ENCODE measurements at regions of chr2 and their contacts with region 1.

Region 1: GRCh38 chr2:203814661-203815540 is 52.7 kb upstream of the CTLA4 start:
- DNase-seq: peak in 7 of 9 donors; percentile 59 to 80 (median 68)
- ATAC-seq: peak; percentile 87
- H3K4me3 ChIP-seq: peak overlapping the region; percentile 24
- H3K4me3 Mint-ChIP-seq: peak overlapping the region; percentile 55 to 90 (median 80)
- H3K27ac ChIP-seq: no peak overlapping the region
- H3K27ac Mint-ChIP-seq: peak overlapping the region; percentile 16 to 92 (median 74)
- H3K4me1 ChIP-seq: peaks cover 23 to 30% of the 10 kb centered on the region in 2 donors
- H3K4me1 Mint-ChIP-seq: peaks cover 27 to 55% (median 52%) of the 10 kb centered on the region in 7 donors
- H3K27me3 ChIP-seq: no peaks in the 10 kb centered on the region
- H3K27me3 Mint-ChIP-seq: peaks cover 0 to 6% (median 0%) of the 10 kb centered on the region in 5 donors

Region 2: DNA sequence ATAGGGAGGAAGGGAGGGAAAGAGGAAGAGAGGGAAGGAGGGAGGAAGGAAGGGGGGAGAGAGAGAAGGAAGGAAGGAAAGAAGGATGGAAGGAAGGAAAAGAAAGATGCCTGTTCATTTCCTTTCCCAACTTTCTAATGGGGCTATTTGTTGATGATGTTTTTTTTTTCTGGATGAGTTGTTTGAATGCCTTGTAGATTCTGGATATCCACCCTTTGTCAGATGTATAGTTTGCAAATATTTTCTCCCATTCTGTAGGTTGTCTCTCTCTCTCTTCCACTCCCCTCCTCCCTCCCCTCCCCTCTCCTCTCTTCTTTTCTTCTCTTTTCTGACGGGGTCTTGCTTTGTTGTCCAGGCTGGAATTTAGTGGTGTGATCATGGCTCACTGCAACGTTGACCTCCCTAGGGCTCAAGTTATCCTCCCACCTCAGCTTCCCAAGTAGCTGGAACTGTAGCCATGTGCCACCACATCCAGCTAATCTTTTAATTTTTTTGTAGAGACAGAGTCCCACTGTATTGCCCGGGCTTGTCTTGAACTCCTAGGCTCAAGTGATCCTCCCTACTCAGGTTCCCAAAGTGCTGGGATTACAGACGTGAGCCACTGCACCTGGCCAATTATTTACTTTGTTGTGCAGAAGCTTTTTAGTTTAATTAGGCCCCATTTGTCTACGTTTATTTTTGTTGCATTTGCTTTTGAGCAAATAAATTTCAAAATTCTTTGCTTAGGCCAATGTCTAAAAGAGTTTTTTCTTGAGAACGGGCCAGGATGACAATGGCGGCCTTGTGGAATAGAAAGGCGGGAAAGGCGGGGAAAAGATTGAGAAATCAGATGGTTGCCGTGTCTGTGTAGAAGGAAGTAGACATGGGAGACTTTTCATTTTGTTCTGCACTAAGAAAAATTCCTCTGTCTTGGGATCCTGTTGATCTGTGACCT is 1237.4 kb before region 1 on chr2:
- CTCF ChIA-PET with region 1: no interaction called
- POLR2A ChIA-PET with region 1: no interaction called
- intact Hi-C with region 1: loop called (anchors 5 kb)
- DNase-seq: no peak
- ATAC-seq: no peak
- H3K4me3 ChIP-seq: no peak overlapping the region
- H3K4me3 Mint-ChIP-seq: no peak overlapping the region
- H3K27ac ChIP-seq: no peak overlapping the region
- H3K27ac Mint-ChIP-seq: peak overlapping the region in 2 of 9 donors; percentile 38 to 53
- H3K4me1 ChIP-seq: no peaks in the 10 kb centered on the region
- H3K4me1 Mint-ChIP-seq: peaks cover 0 to 2% (median 0%) of the 10 kb centered on the region in 7 donors
- H3K27me3 ChIP-seq: no peaks in the 10 kb centered on the region
- H3K27me3 Mint-ChIP-seq: no peaks in the 10 kb centered on the region

Region 3: GRCh38 chr2:202870431-202871299 is 944.2 kb before region 1 on chr2:
- CTCF ChIA-PET with region 1: no interaction called
- POLR2A ChIA-PET with region 1: no interaction called
- intact Hi-C with region 1: loop called in 1 of 2 experiments (anchors 10 kb)
- DNase-seq: peak; percentile 32 to 68 (median 57)
- ATAC-seq: peak; percentile 85
- H3K4me3 ChIP-seq: peak overlapping the region; percentile 84
- H3K4me3 Mint-ChIP-seq: peak overlapping the region; percentile 89 to 98 (median 94)
- H3K27ac ChIP-seq: peak overlapping the region; percentile 60
- H3K27ac Mint-ChIP-seq: peak overlapping the region in 7 of 9 donors; percentile 8 to 84 (median 66)
- H3K4me1 ChIP-seq: peaks cover 0 to 3% of the 10 kb centered on the region in 2 donors
- H3K4me1 Mint-ChIP-seq: peaks cover 0 to 13% (median 7%) of the 10 kb centered on the region in 7 donors
- H3K27me3 ChIP-seq: no peaks in the 10 kb centered on the region
- H3K27me3 Mint-ChIP-seq: no peaks in the 10 kb centered on the region

Region 4: DNA sequence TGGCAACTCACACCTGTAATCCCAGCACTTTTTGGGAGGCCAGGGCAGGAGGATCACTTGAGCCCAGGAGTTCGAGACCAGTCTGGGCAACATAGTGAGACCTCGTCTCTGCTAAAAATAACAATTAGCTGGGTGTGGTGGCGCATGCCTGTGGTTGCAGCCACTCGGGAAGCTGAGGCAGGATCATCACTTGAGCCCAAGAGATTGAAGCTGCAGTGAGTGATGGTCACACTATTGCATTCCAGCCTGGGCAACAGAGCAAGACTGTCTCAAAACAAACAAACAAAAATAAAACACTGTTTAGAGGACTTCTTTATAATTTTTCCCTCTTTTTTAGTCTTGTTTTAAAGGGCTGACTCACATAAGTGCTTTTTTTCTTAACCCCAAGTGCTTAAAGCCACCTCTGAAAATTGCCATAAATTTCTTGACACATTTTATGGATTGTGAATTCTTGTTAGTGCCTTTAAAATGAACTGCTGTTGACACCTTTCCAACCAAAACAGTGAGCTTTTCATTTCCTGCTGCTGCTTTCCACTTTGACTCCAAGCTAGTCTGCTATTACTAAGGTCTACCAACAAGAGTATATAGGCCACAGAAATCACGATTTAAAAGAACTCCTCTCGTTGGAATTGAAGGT is 534.4 kb before region 1 on chr2:
- CTCF ChIA-PET with region 1: no interaction called
- POLR2A ChIA-PET with region 1: no interaction called
- intact Hi-C with region 1: loop called in 1 of 2 experiments (anchors 10 kb)
- DNase-seq: no peak
- ATAC-seq: no peak
- H3K4me3 ChIP-seq: no peak overlapping the region
- H3K4me3 Mint-ChIP-seq: no peak overlapping the region
- H3K27ac ChIP-seq: no peak overlapping the region
- H3K27ac Mint-ChIP-seq: no peak overlapping the region
- H3K4me1 ChIP-seq: no peaks in the 10 kb centered on the region
- H3K4me1 Mint-ChIP-seq: peaks cover 0 to 8% (median 0%) of the 10 kb centered on the region in 7 donors
- H3K27me3 ChIP-seq: no peaks in the 10 kb centered on the region
- H3K27me3 Mint-ChIP-seq: no peaks in the 10 kb centered on the region

Region 5: DNA sequence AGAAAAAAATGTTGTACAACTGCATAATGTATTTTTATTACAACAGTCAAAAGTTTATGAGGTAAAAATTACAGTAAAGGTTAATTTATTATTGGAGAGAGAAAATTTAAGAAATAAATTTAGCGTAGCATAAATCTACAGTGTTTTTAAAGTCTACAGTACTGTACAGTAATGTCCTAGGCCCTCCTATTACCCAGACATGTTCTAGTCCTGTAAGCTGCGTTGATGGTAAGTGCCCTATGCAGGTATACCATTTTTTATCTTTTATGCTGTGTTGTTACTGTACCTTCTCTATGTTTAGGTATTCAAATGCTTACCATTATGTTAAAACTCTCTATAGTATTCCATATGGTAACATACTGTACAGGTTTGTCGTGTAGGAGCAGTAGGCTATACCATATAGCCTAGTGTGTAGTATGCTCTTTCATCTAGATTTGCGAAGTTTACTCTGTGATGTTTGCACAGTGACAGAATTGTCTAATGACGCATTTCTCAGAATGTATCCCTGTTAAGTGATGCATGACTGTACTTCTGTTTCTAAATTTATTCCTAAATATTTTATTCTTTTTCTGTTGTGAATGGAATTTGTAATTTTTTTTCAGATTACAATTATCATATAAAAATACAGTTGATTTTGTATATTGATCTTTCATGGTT is 462.2 kb before region 1 on chr2:
- CTCF ChIA-PET with region 1: no interaction called
- POLR2A ChIA-PET with region 1: no interaction called
- intact Hi-C with region 1: no loop called
- DNase-seq: no peak
- ATAC-seq: no peak
- H3K4me3 ChIP-seq: no peak overlapping the region
- H3K4me3 Mint-ChIP-seq: no peak overlapping the region
- H3K27ac ChIP-seq: no peak overlapping the region
- H3K27ac Mint-ChIP-seq: no peak overlapping the region
- H3K4me1 ChIP-seq: peaks cover 0 to 2% of the 10 kb centered on the region in 2 donors
- H3K4me1 Mint-ChIP-seq: peaks cover 0 to 4% (median 0%) of the 10 kb centered on the region in 7 donors
- H3K27me3 ChIP-seq: no peaks in the 10 kb centered on the region
- H3K27me3 Mint-ChIP-seq: no peaks in the 10 kb centered on the region

Region 6: DNA sequence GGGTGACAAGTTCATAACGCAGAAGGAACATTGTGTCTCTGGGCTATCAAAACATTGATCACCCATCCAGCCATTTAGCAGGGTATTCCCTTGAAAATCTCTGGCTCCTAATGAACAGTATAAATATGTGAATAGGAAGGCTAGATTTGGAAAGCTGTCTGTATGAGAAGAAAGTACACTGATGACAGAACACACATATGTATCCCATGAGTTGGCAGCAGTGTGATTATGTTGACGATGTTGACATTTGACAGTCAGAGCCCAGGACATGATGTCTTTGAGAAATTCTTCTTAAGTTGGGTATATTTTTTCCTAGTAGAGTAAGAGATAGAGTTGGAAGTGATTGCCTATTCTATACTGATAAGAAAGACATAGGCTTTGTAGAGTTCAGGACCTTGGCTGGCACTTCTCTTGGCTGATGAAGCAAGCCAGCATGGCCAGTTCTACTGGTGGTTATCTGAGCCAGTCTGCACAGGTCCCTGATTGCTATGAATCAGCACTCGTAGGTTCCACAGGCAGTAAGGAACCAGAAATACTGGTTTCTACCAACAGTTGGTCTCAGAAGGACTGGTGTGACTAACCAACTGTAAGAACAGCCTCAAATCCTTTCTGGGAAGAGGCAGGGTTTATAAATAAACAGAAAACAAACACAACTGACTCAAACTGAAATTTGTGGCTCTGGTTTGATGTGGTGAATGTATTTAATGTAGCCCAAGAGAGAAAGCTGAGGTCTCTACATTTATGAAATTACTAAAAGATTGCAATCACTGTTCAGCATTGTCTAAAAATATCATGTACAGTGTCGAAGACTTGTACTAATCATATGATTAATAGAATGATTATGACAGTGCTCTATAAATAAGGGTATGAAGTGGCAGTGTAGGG is 235.9 kb before region 1 on chr2:
- CTCF ChIA-PET with region 1: no interaction called
- POLR2A ChIA-PET with region 1: no interaction called
- intact Hi-C with region 1: loop called in 1 of 2 experiments (anchors 2 kb)
- DNase-seq: peak in 1 of 9 donors; percentile 47
- ATAC-seq: no peak
- H3K4me3 ChIP-seq: no peak overlapping the region
- H3K4me3 Mint-ChIP-seq: peak overlapping the region in 1 of 10 donors; percentile 63
- H3K27ac ChIP-seq: no peak overlapping the region
- H3K27ac Mint-ChIP-seq: peak overlapping the region in 2 of 9 donors; percentile 8 to 47
- H3K4me1 ChIP-seq: peaks cover 0 to 2% of the 10 kb centered on the region in 2 donors
- H3K4me1 Mint-ChIP-seq: peaks cover 0 to 44% (median 0%) of the 10 kb centered on the region in 7 donors
- H3K27me3 ChIP-seq: no peaks in the 10 kb centered on the region
- H3K27me3 Mint-ChIP-seq: peaks cover 0 to 64% (median 0%) of the 10 kb centered on the region in 5 donors

Region 7: GRCh38 chr2:203740780-203741281 is 74.1 kb before region 1 on chr2:
- CTCF ChIA-PET with region 1: interaction called, 18 read pairs
- POLR2A ChIA-PET with region 1: interaction called, 8 read pairs
- intact Hi-C with region 1: loop called (anchors 1 to 2 kb)
- DNase-seq: peak in 7 of 9 donors; percentile 68 to 94 (median 88)
- ATAC-seq: peak; percentile 93
- H3K4me3 ChIP-seq: no peak overlapping the region
- H3K4me3 Mint-ChIP-seq: peak overlapping the region; percentile 60 to 87 (median 70)
- H3K27ac ChIP-seq: peak overlapping the region; percentile 80
- H3K27ac Mint-ChIP-seq: peak overlapping the region; percentile 79 to 98 (median 96)
- H3K4me1 ChIP-seq: peaks cover 55 to 86% of the 10 kb centered on the region in 2 donors
- H3K4me1 Mint-ChIP-seq: peaks cover 57 to 93% (median 84%) of the 10 kb centered on the region in 7 donors
- H3K27me3 ChIP-seq: no peaks in the 10 kb centered on the region
- H3K27me3 Mint-ChIP-seq: no peaks in the 10 kb centered on the region

Region 8: GRCh38 chr2:203871371-203871983 is 56.6 kb after region 1 on chr2:
- CTCF ChIA-PET with region 1: interaction called, 6 read pairs
- POLR2A ChIA-PET with region 1: interaction called, 3 read pairs
- intact Hi-C with region 1: loop called (anchors 2 kb)
- DNase-seq: peak in 1 of 9 donors; percentile 45
- ATAC-seq: peak; percentile 30
- H3K4me3 ChIP-seq: no peak overlapping the region
- H3K4me3 Mint-ChIP-seq: peak overlapping the region; percentile 55 to 96 (median 77)
- H3K27ac ChIP-seq: peak overlapping the region; percentile 79
- H3K27ac Mint-ChIP-seq: peak overlapping the region; percentile 48 to 99 (median 92)
- H3K4me1 ChIP-seq: peaks cover 56 to 64% of the 10 kb centered on the region in 2 donors
- H3K4me1 Mint-ChIP-seq: peaks cover 44 to 93% (median 80%) of the 10 kb centered on the region in 7 donors
- H3K27me3 ChIP-seq: no peaks in the 10 kb centered on the region
- H3K27me3 Mint-ChIP-seq: no peaks in the 10 kb centered on the region

Region 9: GRCh38 chr2:204353823-204354222 is 538.9 kb after region 1 on chr2:
- CTCF ChIA-PET with region 1: no interaction called
- POLR2A ChIA-PET with region 1: no interaction called
- intact Hi-C with region 1: no loop called
- DNase-seq: no peak
- ATAC-seq: no peak
- H3K4me3 ChIP-seq: no peak overlapping the region
- H3K4me3 Mint-ChIP-seq: no peak overlapping the region
- H3K27ac ChIP-seq: no peak overlapping the region
- H3K27ac Mint-ChIP-seq: no peak overlapping the region
- H3K4me1 ChIP-seq: no peaks in the 10 kb centered on the region
- H3K4me1 Mint-ChIP-seq: peaks cover 0 to 2% (median 0%) of the 10 kb centered on the region in 7 donors
- H3K27me3 ChIP-seq: no peaks in the 10 kb centered on the region
- H3K27me3 Mint-ChIP-seq: peaks cover 15 to 44% (median 33%) of the 10 kb centered on the region in 5 donors

Region 10: GRCh38 chr2:204984518-204984917 is 1169.6 kb after region 1 on chr2:
- CTCF ChIA-PET with region 1: no interaction called
- POLR2A ChIA-PET with region 1: no interaction called
- intact Hi-C with region 1: no loop called
- DNase-seq: no peak
- ATAC-seq: no peak
- H3K4me3 ChIP-seq: no peak overlapping the region
- H3K4me3 Mint-ChIP-seq: no peak overlapping the region
- H3K27ac ChIP-seq: no peak overlapping the region
- H3K27ac Mint-ChIP-seq: no peak overlapping the region
- H3K4me1 ChIP-seq: peaks cover 0 to 10% of the 10 kb centered on the region in 2 donors
- H3K4me1 Mint-ChIP-seq: peaks cover 5 to 52% (median 32%) of the 10 kb centered on the region in 7 donors
- H3K27me3 ChIP-seq: no peaks in the 10 kb centered on the region
- H3K27me3 Mint-ChIP-seq: peaks cover 0 to 3% (median 0%) of the 10 kb centered on the region in 5 donors

Measured in naive thymus-derived CD4-positive, alpha-beta T cell (primary cell).